ENCODE measurements at regions of chr7 and their contacts with region 1.

Region 1: GRCh38 chr7:128387216-128388144 is 22.3 kb downstream of the IMPDH1 start:
- DNase-seq: peak; percentile 88

Region 2: GRCh38 chr7:128347647-128348097 is 39.8 kb before region 1 on chr7:
- intact Hi-C with region 1: loop called (anchors 1 kb)
- DNase-seq: no peak